Prostate gland (tissue), 2 donors: ENCODE measurements at regions of chr1 and their contacts with region 1.

Region 1: DNA sequence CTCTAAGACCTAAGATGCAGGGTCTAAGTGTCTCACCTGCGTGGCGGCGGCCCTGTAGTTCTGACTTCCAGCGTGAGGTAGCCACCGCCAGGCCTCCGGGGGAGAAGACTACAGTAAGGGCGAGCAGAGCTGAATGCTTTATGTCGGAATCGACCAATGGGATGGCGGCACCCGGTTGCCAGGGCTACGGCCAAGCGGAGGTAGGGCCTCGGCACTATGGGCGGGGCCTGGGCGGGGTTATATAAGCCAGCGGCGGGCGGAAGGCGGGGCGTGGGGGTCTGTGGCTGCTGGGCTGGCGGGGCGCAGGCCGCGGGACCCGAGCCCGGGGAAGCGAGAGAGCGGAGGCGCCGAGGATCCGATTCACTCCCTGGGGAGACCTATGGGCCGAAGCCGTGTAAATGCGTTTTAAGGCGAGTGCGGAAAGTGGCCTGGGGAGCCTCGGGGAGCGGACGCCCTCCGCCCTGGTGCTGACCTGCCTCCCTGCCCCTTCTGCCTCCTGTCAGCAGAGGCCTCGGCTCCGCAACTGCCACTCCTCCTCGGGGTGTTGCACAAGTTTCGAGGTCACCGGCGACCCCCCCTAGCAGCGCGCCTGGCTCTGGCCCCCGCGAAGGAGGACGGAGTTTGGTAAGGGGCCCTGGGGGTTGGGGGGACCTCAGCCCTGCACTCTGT is at the start of gene AZIN2:
- DNase-seq: peak; percentile 98
- H3K4me3 ChIP-seq: peak within 1 kb of the TSS; percentile 65 to 73
- H3K27ac ChIP-seq: peak within 1 kb of the TSS; percentile 22 to 54
- H3K4me1 ChIP-seq: no peaks in the 10 kb centered on the region
- H3K27me3 ChIP-seq: no peaks in the 10 kb centered on the region
- CTCF ChIP-seq: peak in 2 of 4 experiments; percentile 32 to 36
- POLR2A ChIP-seq: peak; percentile 95
- total RNA-seq, gene AZIN2: 5.6 to 16.0 TPM

Region 2: DNA sequence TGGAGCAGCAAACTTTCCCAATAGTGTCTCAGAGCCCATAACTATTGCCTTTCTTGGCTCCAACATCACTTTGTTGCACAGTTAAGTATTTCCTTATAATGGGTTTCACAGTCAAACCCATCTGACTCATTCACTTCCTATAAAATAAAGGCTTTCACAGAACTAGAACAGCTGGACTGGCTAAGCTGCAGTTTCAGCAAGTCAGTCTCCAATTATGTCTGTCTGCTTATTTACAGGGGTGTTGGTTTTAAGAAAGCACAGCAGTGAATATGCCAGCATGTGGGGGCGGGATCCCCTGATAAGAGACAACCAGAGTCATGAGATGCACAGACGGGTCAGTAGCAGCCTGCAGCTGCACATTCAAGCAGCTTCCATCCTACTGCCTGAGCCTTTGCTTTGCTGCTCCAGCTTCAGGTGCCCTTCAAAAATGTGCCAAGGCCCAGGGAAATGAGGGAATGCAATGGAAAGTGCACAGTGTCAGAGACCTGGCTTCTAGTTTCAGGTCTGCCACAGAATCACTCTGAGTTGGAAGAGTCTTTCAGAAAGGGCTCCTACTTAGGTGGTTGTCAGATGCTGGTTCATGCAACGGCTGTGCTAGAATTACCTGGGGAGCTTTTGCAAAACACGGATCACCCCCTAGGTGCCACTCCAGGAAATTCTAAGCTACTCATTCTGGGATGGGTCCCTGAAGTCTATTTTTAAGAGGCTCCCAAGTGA is 141.2 kb before region 1 on chr1:
- intact Hi-C with region 1: loop called (anchors 10 kb)
- DNase-seq: no peak
- H3K4me3 ChIP-seq: no peak overlapping the region
- H3K27ac ChIP-seq: no peak overlapping the region
- H3K4me1 ChIP-seq: peaks cover 3% of the 10 kb centered on the region
- H3K27me3 ChIP-seq: no peaks in the 10 kb centered on the region
- CTCF ChIP-seq: no peak
- POLR2A ChIP-seq: peak; percentile 10

Region 3: DNA sequence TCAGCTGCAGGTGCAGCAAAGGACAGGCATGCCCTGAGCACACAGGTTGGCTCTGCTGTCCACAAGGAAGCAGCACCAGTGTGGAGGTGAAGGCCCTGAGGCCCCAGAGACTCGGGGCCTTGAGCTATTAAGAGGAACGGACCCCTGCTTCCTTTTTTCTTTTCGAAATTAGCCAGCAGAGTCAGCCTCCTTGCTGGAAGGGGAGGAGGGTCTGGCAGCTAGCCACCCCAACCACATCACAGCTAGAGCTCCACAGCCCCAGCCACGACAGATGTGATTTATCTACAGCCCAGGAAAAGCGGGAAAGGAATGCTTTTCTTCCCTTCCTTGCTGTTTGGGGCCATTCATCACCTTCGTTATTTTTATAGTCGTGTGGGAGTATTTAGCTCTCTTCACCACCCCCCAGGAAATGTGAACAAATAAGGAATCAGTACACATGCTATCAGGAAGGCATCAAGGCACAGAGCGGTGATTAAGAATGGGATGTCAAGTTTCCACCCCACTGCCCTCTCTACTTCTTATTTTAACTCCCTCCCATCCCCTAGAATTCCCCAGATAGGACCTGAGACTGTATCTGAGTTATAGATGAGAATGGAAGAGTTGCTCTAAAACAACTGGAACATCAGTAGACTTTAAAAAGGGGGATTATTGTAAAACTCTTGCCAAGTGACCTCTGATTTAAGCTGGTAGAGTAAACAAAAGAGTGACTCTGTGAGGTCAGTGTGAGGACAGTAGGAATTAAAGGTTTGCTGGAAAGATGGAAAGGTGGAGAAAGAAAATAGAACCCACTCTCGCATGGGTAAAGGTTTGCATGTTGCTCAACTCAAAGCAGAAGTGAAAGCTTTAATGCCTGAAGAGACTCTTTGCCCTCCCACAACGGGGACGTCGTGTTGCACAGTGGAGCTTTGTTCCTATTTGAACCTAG is 1449.2 kb after region 1 on chr1:
- intact Hi-C with region 1: no loop called
- DNase-seq: no peak
- H3K4me3 ChIP-seq: no peak overlapping the region
- H3K27ac ChIP-seq: no peak overlapping the region
- H3K4me1 ChIP-seq: no peaks in the 10 kb centered on the region
- H3K27me3 ChIP-seq: no peaks in the 10 kb centered on the region
- CTCF ChIP-seq: no peak
- POLR2A ChIP-seq: no peak